Dorsolateral prefrontal cortex (tissue), 120 donors: ENCODE measurements at regions of chr10 and their contacts with region 1.

Region 1: DNA sequence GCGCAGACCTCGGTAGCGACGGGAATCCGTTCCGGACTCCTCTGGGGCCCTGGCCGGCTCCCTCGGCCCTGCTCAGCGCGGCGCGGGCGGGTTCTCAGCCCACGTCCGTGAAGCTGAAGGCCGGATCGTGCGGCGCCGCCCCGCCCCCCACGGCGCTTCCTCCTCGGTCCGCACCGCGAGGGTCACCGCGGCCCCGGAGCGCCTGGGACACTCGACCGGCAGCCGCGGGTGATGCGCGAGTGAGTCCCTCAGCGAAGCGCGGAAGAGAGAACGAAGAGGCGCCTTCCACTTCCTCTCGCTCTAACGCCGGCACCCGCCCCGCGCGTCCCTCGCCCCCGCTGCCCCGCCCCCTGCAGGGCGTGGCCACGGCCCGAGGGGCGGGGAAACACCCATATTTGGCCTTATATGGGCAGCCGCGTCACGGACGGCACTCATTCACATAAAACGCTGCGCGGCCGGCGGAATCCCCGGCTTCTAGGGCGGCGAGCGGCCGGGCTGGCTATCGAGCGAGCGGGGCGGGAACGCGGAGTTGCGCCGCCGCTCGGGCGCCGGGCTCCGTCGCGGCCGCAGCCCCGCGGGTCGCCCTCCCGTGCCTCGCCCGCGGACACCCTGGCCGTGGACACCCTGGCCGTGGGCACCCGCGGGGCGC is at the start of gene DUSP5:
- DNase-seq: peak; percentile 81 to 97 (median 92)
- H3K4me3 ChIP-seq: peak within 1 kb of the TSS; percentile 50 to 88 (median 80)
- H3K27ac ChIP-seq: peak within 1 kb of the TSS in 58 of 59 donors; percentile 13 to 93 (median 78)
- H3K27me3 ChIP-seq: peaks cover 0 to 22% (median 0%) of the 10 kb centered on the region in 45 donors
- CTCF ChIP-seq: peak in 23 of 56 donors; percentile 5 to 43 (median 22)
- total RNA-seq, gene DUSP5: 3.1 to 34.1 (median 7.7) TPM

Region 2: DNA sequence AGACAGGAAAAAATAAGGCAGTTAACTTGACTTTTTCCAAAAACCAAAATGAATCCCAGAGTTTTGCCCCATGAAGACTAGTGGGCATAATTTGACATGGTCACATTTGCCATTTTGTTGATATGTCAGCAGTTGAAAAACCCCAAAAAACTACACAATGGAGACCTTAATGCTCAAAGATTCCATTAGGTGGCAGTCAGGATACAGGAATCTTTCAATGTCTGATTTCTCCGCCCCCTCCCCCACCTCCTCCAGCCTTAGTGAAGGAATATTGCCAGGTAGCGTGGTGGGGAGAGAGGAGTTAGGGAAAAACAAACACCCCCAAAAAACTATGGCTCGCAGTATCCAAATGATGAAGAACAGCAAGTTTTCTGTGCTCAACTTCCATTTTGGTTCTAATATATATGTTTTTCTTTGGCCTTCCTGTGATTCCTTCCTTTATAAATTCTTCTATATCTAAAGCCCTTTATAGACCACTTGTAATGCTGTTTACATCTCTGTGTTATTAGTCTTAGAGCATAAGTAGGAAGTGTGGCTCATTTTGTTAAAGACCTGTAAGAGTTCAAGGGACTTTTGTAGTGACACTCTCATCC is 186.1 kb before region 1 on chr10:
- intact Hi-C with region 1: loop called in 1 of 2 experiments (anchors 5 kb)
- DNase-seq: peak in 4 of 10 donors; percentile 14 to 45 (median 33)
- H3K4me3 ChIP-seq: peak overlapping the region in 1 of 59 donors; percentile 25
- H3K27ac ChIP-seq: no peak overlapping the region
- H3K27me3 ChIP-seq: no peaks in the 10 kb centered on the region
- CTCF ChIP-seq: peak; percentile 43 to 88 (median 75)

Region 3: GRCh38 chr10:110354322-110354766 is 143.2 kb before region 1 on chr10:
- intact Hi-C with region 1: loop called in 1 of 2 experiments (anchors 10 kb)
- DNase-seq: peak in 9 of 10 donors; percentile 53 to 86 (median 79)
- H3K4me3 ChIP-seq: no peak overlapping the region
- H3K27ac ChIP-seq: peak overlapping the region in 1 of 59 donors; percentile 79
- H3K27me3 ChIP-seq: peaks cover 0 to 9% (median 0%) of the 10 kb centered on the region in 45 donors
- CTCF ChIP-seq: peak; percentile 29 to 81 (median 69)

Region 4: DNA sequence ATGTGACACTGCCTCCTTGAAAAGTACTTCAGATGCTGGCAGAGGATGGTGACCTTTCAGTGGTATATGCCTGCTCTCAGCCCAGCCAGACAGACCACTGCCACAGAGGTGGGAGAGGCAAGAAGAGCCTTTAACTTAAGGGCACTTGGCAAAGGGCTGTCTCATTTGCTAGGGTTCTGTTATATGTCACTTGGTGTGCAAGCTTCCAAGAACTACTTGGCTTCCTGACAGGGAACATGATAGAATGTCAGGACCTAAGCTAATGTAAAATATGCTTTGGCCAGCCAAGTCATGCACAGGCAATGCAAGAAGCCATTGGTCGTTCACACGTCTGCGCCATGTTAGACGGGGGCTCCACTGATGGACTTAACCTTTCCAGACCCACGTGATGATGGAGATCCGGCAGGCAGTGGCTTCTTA is 201.2 kb after region 1 on chr10:
- intact Hi-C with region 1: no loop called
- DNase-seq: no peak
- H3K4me3 ChIP-seq: no peak overlapping the region
- H3K27ac ChIP-seq: no peak overlapping the region
- H3K27me3 ChIP-seq: peaks cover 0 to 4% (median 0%) of the 10 kb centered on the region in 45 donors
- CTCF ChIP-seq: no peak